ENCODE measurements at regions of chrX and their contacts with region 1.

Region 1: GRCh38 chrX:46686003-46686645 is 72.8 kb downstream of the SLC9A7 start:
- DNase-seq: peak in 4 of 5 donors; percentile 34 to 45 (median 42)
- H3K4me3 ChIP-seq: no peak overlapping the region
- H3K4me3 Mint-ChIP-seq: no peak overlapping the region
- H3K27ac ChIP-seq: no peak overlapping the region
- H3K27ac Mint-ChIP-seq: peak overlapping the region in 1 of 7 donors; percentile 60
- H3K4me1 ChIP-seq: no peaks in the 10 kb centered on the region
- H3K4me1 Mint-ChIP-seq: peaks cover 0 to 2% (median 0%) of the 10 kb centered on the region in 4 donors
- H3K27me3 ChIP-seq: no peaks in the 10 kb centered on the region
- H3K27me3 Mint-ChIP-seq: no peaks in the 10 kb centered on the region

Region 2: DNA sequence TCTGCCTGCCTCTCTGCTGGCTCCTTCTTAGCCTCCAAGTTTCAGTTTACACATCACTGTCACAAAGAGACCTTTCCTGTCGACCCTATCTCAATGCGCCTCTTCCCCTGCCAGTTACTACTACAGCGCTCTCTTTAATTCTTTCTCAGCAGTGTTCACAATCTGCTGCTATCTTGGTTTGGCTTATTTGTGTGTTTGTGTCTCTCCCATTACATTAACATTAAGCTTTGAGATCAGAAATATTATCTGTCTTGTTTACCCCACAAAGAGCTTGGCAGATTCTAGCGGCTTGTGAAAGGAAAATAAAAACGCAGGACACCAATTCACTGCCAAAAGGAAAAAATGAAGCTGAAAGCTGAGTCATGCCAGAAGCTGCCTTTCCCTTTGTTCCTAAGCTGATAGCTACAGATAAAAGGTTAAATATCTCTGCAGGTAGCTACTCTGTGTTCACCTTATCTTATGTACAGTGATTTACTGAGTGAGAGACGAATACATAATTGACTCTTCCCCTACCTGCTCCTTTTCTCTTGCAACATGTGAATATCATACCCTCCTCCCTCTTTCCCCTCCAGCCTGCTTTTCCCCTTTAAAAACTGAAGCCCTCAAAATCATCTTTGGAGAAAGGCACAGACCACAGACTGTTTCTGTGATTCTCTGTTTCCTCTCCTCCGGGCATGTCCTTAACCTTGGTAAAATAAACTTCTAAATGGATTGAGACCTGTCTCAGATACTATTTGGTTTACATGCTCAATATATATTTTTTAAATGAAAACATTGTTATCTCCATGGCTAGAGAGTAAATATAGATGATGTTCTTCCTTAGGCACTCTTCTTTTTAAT is 92.1 kb after region 1 on chrX:
- CTCF ChIA-PET with region 1: no interaction called
- POLR2A ChIA-PET with region 1: no interaction called
- intact Hi-C with region 1: no loop called
- DNase-seq: no peak
- H3K4me3 ChIP-seq: no peak overlapping the region
- H3K4me3 Mint-ChIP-seq: no peak overlapping the region
- H3K27ac ChIP-seq: no peak overlapping the region
- H3K27ac Mint-ChIP-seq: no peak overlapping the region
- H3K4me1 ChIP-seq: no peaks in the 10 kb centered on the region
- H3K4me1 Mint-ChIP-seq: peaks cover 0 to 3% (median 0%) of the 10 kb centered on the region in 4 donors
- H3K27me3 ChIP-seq: no peaks in the 10 kb centered on the region
- H3K27me3 Mint-ChIP-seq: peaks cover 0 to 1% of the 10 kb centered on the region in 2 donors

Region 3: GRCh38 chrX:46796574-46797191 is 110.6 kb after region 1 on chrX:
- CTCF ChIA-PET with region 1: interaction called, 4 read pairs
- POLR2A ChIA-PET with region 1: no interaction called
- intact Hi-C with region 1: loop called (anchors 10 kb)
- DNase-seq: peak; percentile 47 to 57 (median 52)
- H3K4me3 ChIP-seq: no peak overlapping the region
- H3K4me3 Mint-ChIP-seq: no peak overlapping the region
- H3K27ac ChIP-seq: no peak overlapping the region
- H3K27ac Mint-ChIP-seq: no peak overlapping the region
- H3K4me1 ChIP-seq: peaks cover 8% of the 10 kb centered on the region
- H3K4me1 Mint-ChIP-seq: peaks cover 0 to 20% (median 8%) of the 10 kb centered on the region in 4 donors
- H3K27me3 ChIP-seq: no peaks in the 10 kb centered on the region
- H3K27me3 Mint-ChIP-seq: no peaks in the 10 kb centered on the region

Region 4: GRCh38 chrX:48636776-48637175 is 1950.7 kb after region 1 on chrX:
- CTCF ChIA-PET with region 1: no interaction called
- POLR2A ChIA-PET with region 1: no interaction called
- intact Hi-C with region 1: no loop called
- DNase-seq: no peak
- H3K4me3 ChIP-seq: no peak overlapping the region
- H3K4me3 Mint-ChIP-seq: no peak overlapping the region
- H3K27ac ChIP-seq: no peak overlapping the region
- H3K27ac Mint-ChIP-seq: no peak overlapping the region
- H3K4me1 ChIP-seq: peaks cover 7% of the 10 kb centered on the region
- H3K4me1 Mint-ChIP-seq: peaks cover 0 to 9% (median under 1%) of the 10 kb centered on the region in 4 donors
- H3K27me3 ChIP-seq: no peaks in the 10 kb centered on the region
- H3K27me3 Mint-ChIP-seq: no peaks in the 10 kb centered on the region

Measured in CD4-positive, alpha-beta memory T cell (primary cell).